Heart right ventricle (tissue), 16 donors: ENCODE measurements at regions of chr10 and their contacts with region 1.

Region 1: DNA sequence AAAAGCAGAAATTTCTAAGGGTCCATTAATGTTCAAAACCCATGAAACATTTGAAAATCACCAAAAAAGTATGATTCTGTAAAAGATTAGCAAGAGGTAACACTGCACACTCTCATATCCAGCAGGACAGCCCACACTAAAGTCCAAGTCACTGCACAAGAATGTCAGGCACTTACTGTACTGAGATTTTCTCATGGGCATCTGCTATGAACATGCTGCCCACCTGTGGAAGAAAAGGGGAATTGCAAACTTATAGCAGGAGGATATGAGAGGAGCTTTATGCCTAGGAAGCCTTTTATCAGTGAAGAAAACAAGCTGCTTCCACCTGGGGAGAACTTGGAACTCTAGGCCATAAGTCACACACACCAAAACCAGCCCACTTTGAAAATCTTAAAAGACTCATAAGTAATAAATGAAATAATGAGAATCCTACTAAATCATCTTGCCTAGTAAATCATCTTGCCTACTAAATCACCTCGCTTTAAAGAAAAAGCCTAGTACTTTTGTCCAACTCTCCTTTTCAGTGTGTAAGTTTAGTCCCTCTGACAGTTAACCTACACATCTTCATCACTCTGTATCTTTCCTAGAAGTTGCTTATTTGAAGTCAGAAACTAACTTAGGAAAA is 46.1 kb downstream of the ARMH3 start:
- DNase-seq: peak in 1 of 2 donors; percentile 56
- ATAC-seq: peak; percentile 86 to 98 (median 94)
- H3K4me3 ChIP-seq: no peak overlapping the region
- H3K27ac ChIP-seq: no peak overlapping the region
- H3K4me1 ChIP-seq: peaks cover 0 to 22% (median 0%) of the 10 kb centered on the region in 9 donors
- H3K27me3 ChIP-seq: no peaks in the 10 kb centered on the region
- CTCF ChIP-seq: peak; percentile 70 to 94 (median 87)

Region 2: DNA sequence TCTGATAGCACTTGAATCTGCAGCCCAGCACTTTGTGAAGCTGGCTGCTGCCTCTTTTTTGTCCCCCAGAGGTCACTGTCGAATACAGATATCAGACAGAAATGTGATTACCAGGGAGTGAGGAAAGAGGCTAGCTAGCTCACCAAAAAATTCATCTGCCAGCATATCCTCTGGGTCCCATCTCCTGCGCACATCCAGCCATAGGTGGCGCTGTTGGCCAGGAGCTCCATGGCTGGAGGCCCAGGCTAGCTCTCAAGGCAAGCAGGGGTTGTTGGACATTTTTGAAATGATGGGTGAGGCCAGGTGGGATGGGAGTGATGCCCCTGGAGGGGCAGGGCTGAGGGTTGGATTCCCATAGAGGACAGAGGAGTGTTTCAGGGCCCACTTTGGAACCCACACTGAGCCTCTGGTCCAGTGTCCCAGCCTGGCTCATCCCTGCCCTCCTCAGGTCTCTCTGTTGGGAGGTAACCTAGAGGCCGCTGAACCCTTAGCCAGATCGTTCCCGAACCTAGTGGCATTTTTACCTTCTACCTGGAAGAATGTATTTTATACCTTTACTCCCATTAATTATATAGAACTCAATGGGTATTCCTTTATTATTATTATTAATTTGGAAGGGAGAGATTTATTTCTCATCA is 407.0 kb before region 1 on chr10:
- intact Hi-C with region 1: loop called in 1 of 10 experiments (anchors 10 kb)
- DNase-seq: peak; percentile 19 to 75
- ATAC-seq: peak; percentile 73 to 90 (median 84)
- H3K4me3 ChIP-seq: no peak overlapping the region
- H3K27ac ChIP-seq: no peak overlapping the region
- H3K4me1 ChIP-seq: peaks cover 0 to 16% (median 5%) of the 10 kb centered on the region in 9 donors
- H3K27me3 ChIP-seq: no peaks in the 10 kb centered on the region
- CTCF ChIP-seq: peak; percentile 69 to 89 (median 85)

Region 3: GRCh38 chr10:101889256-101890210 is 120.4 kb before region 1 on chr10:
- intact Hi-C with region 1: loop called in 9 of 10 experiments (anchors 1 to 10 kb)
- DNase-seq: peak; percentile 62 to 79
- ATAC-seq: peak in 3 of 8 donors; percentile 52 to 60 (median 59)
- H3K4me3 ChIP-seq: no peak overlapping the region
- H3K27ac ChIP-seq: peak overlapping the region in 3 of 10 donors; percentile 43 to 59 (median 56)
- H3K4me1 ChIP-seq: peaks cover 0 to 63% (median 21%) of the 10 kb centered on the region in 9 donors
- H3K27me3 ChIP-seq: no peaks in the 10 kb centered on the region
- CTCF ChIP-seq: peak; percentile 46 to 83 (median 78)

Region 4: DNA sequence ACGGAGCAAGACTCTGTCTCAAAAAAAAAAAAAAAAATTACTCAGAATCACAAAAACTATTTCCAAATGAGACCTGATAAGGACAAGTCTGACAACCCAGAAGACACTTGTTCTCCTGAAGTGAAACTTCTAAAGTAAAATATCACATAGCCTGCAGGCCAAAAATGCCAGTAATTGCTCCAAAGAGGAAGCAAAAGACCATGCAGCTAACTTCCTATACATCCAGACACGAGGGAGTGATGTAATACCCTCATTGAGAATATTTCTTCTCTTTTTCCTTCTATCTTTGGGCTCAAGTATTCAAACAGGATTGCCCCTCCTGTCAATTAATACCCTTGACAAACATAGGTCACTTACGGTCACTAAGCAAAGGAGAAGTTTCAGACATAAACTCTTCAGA is 14.9 kb after region 1 on chr10:
- intact Hi-C with region 1: loop called in 1 of 10 experiments (anchors 1 kb)
- DNase-seq: no peak
- ATAC-seq: no peak
- H3K4me3 ChIP-seq: no peak overlapping the region
- H3K27ac ChIP-seq: peak overlapping the region in 1 of 10 donors; percentile 31
- H3K4me1 ChIP-seq: peaks cover 0 to 14% (median 0%) of the 10 kb centered on the region in 9 donors
- H3K27me3 ChIP-seq: no peaks in the 10 kb centered on the region
- CTCF ChIP-seq: no peak

Region 5: GRCh38 chr10:103626178-103626577 is 1616.3 kb after region 1 on chr10:
- intact Hi-C with region 1: loop called in 1 of 10 experiments (anchors 10 kb)
- DNase-seq: no peak
- ATAC-seq: no peak
- H3K4me3 ChIP-seq: no peak overlapping the region
- H3K27ac ChIP-seq: no peak overlapping the region
- H3K4me1 ChIP-seq: peaks cover 7 to 31% (median 19%) of the 10 kb centered on the region in 9 donors
- H3K27me3 ChIP-seq: no peaks in the 10 kb centered on the region
- CTCF ChIP-seq: no peak